Right ventricle myocardium superior (tissue), 1 donor: ENCODE measurements at regions of chr12 and their contacts with region 1.

Region 1: GRCh38 chr12:52213512-52214420 is 19.3 kb upstream of the KRT7 start:
- DNase-seq: peak; percentile 83
- ATAC-seq: peak; percentile 91

Region 2: DNA sequence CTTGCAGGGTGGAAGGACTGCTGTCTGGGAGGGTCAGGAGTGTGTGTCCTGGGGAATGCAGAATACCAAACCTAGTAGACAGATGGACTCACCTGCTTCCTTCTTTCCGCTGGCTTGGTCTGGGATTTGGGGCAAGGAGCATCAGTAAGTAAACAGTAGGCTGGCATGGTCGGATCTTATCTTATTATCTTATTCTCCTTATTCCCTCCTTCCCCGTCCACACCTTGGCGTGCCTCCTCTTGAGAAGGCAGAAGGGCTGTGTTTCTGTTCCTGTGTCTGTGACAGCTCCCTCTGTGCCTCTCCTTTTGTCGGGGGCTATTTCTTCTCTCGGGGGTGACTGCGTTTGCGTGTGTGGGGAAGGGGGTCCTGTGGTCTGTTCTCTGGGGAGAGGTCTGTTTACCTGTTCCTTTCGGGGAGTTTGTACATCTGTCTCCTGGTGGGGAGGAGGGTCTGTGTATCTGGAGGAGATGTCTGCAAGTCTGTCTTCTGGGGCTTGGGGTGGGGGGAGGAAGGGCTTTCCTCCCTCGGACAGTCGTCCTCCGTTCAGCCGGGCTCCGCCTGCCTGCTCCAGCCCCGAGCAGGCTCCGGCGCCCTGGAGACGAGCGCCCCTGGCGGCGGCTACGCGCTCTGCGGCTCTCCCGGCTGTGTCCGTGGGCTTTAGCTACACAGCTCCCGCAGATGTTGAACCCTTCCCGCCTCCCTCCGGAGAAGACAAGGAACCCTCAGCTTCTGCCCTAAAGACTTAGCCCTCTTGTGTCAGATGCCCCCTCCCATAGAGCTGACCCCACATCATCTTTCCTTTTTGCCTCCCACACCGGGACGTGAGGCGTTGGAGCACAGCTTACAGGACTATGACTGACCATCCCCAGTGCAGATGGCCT is 65.0 kb after region 1 on chr12:
- intact Hi-C with region 1: loop called (anchors 5 kb)
- DNase-seq: peak; percentile 83
- ATAC-seq: peak; percentile 97

Region 3: GRCh38 chr12:52327052-52327829 is 113.5 kb after region 1 on chr12:
- intact Hi-C with region 1: loop called (anchors 10 kb)
- DNase-seq: peak; percentile 61
- ATAC-seq: peak; percentile 93